B cell (primary cell): ENCODE measurements at regions of chr10 and their contacts with region 1.

Region 1: DNA sequence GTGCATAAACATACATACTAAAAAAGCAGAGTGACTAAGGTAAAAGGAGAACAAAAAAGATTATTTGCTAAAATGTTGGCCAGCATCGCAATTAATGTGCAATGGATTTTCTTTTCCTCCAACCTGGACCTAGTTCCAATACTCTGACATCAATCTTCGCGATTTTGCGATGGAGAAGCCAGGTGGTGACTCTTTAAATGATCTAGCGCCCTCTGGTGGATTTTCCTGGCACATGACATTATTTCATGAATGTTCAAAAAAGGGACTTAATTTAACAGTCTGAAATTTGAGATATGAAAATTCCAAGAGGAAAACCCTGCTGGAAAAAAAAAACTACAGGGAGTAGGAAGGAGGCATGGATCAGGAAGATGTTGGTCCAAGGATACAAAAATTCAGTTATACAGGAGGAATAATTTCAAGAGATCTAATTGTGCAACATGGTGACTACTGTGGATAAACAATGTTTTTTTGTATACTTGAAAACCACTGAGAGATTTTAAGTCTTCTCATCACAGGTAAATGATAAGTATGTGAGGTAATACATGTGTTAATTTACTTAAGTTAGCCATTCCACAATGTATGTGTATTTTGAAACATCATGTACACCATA is 4.3 kb upstream of the KCNMA1 start:
- DNase-seq: peak; percentile 77
- ATAC-seq: no peak
- H3K4me3 ChIP-seq: no peak overlapping the region
- H3K4me3 Mint-ChIP-seq: no peak overlapping the region
- H3K27ac ChIP-seq: no peak overlapping the region
- H3K27ac Mint-ChIP-seq: no peak overlapping the region
- H3K4me1 ChIP-seq: peaks cover 19 to 20% of the 10 kb centered on the region in 2 donors
- H3K4me1 Mint-ChIP-seq: peaks cover 18% of the 10 kb centered on the region
- H3K27me3 ChIP-seq: peaks cover 0 to 32% (median 18%) of the 10 kb centered on the region in 4 experiments
- H3K27me3 Mint-ChIP-seq: peaks cover 35% of the 10 kb centered on the region
- CTCF ChIP-seq: peak; percentile 88

Region 2: GRCh38 chr10:77165445-77166208 is 476.3 kb before region 1 on chr10:
- CTCF ChIA-PET with region 1: interaction called, 523 read pairs
- POLR2A ChIA-PET with region 1: no interaction called
- intact Hi-C with region 1: loop called (anchors 2 kb)
- DNase-seq: peak; percentile 58
- ATAC-seq: peak; percentile 51
- H3K4me3 ChIP-seq: no peak overlapping the region
- H3K4me3 Mint-ChIP-seq: peak overlapping the region; percentile 44
- H3K27ac ChIP-seq: no peak overlapping the region
- H3K27ac Mint-ChIP-seq: no peak overlapping the region
- H3K4me1 ChIP-seq: no peaks in the 10 kb centered on the region
- H3K4me1 Mint-ChIP-seq: peaks cover 2% of the 10 kb centered on the region
- H3K27me3 ChIP-seq: peaks cover 0 to 9% (median 0%) of the 10 kb centered on the region in 4 experiments
- H3K27me3 Mint-ChIP-seq: peaks cover 20% of the 10 kb centered on the region
- CTCF ChIP-seq: peak; percentile 89

Region 3: DNA sequence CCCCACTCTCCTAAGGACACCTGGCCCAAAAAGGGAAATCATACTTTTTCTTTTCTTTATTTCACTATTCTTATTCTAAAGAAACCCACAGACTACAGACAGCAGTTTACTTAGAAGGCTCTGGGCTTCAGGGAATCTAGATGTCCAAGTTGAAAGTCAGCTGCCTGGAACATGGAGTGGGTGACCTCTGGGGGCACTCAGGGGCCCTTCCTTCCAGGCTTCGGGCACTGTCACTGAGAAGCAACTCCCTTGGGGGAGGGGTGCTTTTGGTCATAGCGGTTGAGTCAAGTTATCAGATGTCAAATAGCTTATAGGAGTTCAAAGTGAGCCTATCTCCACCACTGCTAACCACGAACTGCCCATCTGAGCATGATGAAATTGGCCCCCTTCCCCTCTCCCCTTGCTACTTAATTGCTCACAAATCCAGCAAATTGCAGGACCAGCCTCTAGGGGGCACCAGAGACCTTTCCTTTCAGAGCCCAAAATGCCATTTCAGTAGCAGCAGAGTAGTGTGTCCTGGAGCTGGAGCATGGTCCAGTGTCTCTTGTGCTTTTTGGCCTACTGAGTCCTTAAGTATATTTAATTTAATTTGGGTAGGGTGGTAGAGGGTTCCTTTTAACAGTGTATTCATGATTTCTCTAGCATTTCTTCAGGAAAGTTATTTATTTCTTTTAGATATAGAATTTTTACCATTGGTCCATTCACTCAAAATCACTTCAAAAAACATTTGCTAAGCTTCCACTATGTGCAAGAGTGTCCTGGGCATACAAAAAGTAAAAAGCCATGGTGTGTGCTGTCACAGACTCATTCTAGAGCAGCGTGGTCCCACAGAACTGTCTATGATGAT is 468.1 kb before region 1 on chr10:
- CTCF ChIA-PET with region 1: interaction called, 523 read pairs
- POLR2A ChIA-PET with region 1: no interaction called
- intact Hi-C with region 1: loop called (anchors 1 kb)
- DNase-seq: peak; percentile 77
- ATAC-seq: no peak
- H3K4me3 ChIP-seq: no peak overlapping the region
- H3K4me3 Mint-ChIP-seq: no peak overlapping the region
- H3K27ac ChIP-seq: no peak overlapping the region
- H3K27ac Mint-ChIP-seq: no peak overlapping the region
- H3K4me1 ChIP-seq: peaks cover 0 to 6% of the 10 kb centered on the region in 2 donors
- H3K4me1 Mint-ChIP-seq: peaks cover 2% of the 10 kb centered on the region
- H3K27me3 ChIP-seq: peaks cover 0 to 5% (median 0%) of the 10 kb centered on the region in 4 experiments
- H3K27me3 Mint-ChIP-seq: peaks cover 4% of the 10 kb centered on the region
- CTCF ChIP-seq: peak; percentile 98

Region 4: DNA sequence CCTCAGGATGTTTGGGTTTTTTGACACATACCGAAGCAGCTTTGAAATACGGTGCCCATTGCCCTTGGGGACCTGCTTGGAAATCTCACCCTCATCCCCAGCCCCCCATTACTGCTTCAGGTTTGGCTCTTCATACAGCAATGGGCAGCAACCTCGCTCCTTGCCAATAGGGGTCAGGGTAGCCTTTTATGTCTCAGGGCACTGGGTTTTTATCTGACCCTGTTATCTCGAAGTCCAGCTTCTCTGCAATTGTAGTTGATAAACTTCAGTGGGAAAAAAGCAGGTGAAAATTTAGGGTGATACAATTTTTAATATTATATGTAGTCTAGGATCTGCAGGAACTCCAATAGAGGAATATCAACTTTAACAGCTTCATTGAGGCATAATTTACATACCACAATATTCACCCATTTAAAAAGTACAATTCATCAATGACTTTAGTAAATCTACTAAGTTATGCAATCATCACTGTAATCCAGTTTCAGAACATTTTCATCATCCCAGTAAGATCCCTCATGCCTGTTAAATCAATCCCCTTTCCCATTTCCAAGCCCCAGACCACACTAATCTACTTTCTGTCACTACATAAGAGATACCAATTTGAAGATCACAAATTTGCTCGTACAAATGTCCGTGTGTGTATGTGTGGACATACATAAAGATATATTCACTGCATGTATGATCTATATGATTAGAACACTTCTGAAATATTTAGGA is 390.4 kb before region 1 on chr10:
- CTCF ChIA-PET with region 1: interaction called, 32 read pairs
- POLR2A ChIA-PET with region 1: no interaction called
- intact Hi-C with region 1: loop called (anchors 1 kb)
- DNase-seq: peak; percentile 43
- ATAC-seq: no peak
- H3K4me3 ChIP-seq: no peak overlapping the region
- H3K4me3 Mint-ChIP-seq: no peak overlapping the region
- H3K27ac ChIP-seq: no peak overlapping the region
- H3K27ac Mint-ChIP-seq: no peak overlapping the region
- H3K4me1 ChIP-seq: no peaks in the 10 kb centered on the region
- H3K4me1 Mint-ChIP-seq: no peaks in the 10 kb centered on the region
- H3K27me3 ChIP-seq: no peaks in the 10 kb centered on the region
- H3K27me3 Mint-ChIP-seq: no peaks in the 10 kb centered on the region
- CTCF ChIP-seq: peak; percentile 49

Region 5: GRCh38 chr10:77391605-77392235 is 250.2 kb before region 1 on chr10:
- CTCF ChIA-PET with region 1: interaction called, 26 read pairs
- POLR2A ChIA-PET with region 1: no interaction called
- intact Hi-C with region 1: loop called (anchors 1 kb)
- DNase-seq: peak; percentile 42
- ATAC-seq: no peak
- H3K4me3 ChIP-seq: no peak overlapping the region
- H3K4me3 Mint-ChIP-seq: no peak overlapping the region
- H3K27ac ChIP-seq: no peak overlapping the region
- H3K27ac Mint-ChIP-seq: no peak overlapping the region
- H3K4me1 ChIP-seq: no peaks in the 10 kb centered on the region
- H3K4me1 Mint-ChIP-seq: peaks cover 5% of the 10 kb centered on the region
- H3K27me3 ChIP-seq: peaks cover 0 to 9% (median 0%) of the 10 kb centered on the region in 4 experiments
- H3K27me3 Mint-ChIP-seq: peaks cover 11% of the 10 kb centered on the region
- CTCF ChIP-seq: peak; percentile 20

Region 6: DNA sequence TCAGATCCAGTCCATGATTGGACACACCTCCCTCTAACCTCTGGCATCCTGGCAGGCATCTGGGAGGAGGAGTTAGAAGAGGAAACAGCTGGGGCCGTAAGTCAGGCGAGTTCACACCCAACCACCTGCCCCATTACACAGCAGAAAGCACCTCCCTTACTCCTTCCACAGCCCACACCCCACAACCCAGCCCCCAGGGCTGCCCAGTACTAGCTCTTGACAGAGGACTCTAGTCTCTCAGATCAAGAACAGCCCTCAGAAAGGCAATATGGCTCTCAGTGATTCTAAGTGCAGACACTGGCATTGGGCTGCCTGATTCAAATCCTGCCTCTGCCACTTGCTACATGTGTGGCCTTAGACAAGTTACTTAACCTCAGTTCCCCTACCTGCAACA is 38.4 kb before region 1 on chr10:
- CTCF ChIA-PET with region 1: interaction called, 4 read pairs
- POLR2A ChIA-PET with region 1: no interaction called
- intact Hi-C with region 1: loop called (anchors 2 kb)
- DNase-seq: peak; percentile 27
- ATAC-seq: peak; percentile 21
- H3K4me3 ChIP-seq: no peak overlapping the region
- H3K4me3 Mint-ChIP-seq: peak overlapping the region; percentile 40
- H3K27ac ChIP-seq: no peak overlapping the region
- H3K27ac Mint-ChIP-seq: peak overlapping the region; percentile 60
- H3K4me1 ChIP-seq: peaks cover 18 to 28% of the 10 kb centered on the region in 2 donors
- H3K4me1 Mint-ChIP-seq: peaks cover 26% of the 10 kb centered on the region
- H3K27me3 ChIP-seq: no peaks in the 10 kb centered on the region
- H3K27me3 Mint-ChIP-seq: no peaks in the 10 kb centered on the region
- CTCF ChIP-seq: no peak

Region 7: GRCh38 chr10:77653210-77653609 is 11.3 kb after region 1 on chr10:
- CTCF ChIA-PET with region 1: interaction called, 18 read pairs
- POLR2A ChIA-PET with region 1: no interaction called
- intact Hi-C with region 1: no loop called
- DNase-seq: no peak
- ATAC-seq: no peak
- H3K4me3 ChIP-seq: no peak overlapping the region
- H3K4me3 Mint-ChIP-seq: no peak overlapping the region
- H3K27ac ChIP-seq: no peak overlapping the region
- H3K27ac Mint-ChIP-seq: no peak overlapping the region
- H3K4me1 ChIP-seq: no peaks in the 10 kb centered on the region
- H3K4me1 Mint-ChIP-seq: peaks cover 6% of the 10 kb centered on the region
- H3K27me3 ChIP-seq: no peaks in the 10 kb centered on the region
- H3K27me3 Mint-ChIP-seq: peaks cover 6% of the 10 kb centered on the region
- CTCF ChIP-seq: no peak

Region 8: DNA sequence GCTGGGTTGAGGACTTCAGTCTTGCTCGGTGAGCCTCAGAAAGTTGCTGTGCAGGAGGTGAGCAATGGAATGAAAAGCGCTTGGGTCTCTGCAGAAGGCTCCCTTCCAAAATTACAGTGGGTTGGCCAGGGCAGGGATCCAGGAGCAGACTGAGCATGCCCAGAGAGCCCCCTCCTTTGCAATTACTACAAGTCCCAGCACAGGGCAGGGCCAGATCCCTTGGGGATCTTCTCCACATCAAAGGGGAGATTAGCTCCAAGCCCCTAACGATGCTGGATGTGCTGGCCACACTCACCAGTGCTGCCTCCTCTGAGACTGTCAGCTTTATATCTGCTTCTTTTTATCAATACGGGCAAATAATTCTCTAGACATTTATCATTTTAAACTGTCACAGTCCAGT is 729.2 kb after region 1 on chr10:
- CTCF ChIA-PET with region 1: no interaction called
- POLR2A ChIA-PET with region 1: no interaction called
- intact Hi-C with region 1: no loop called
- DNase-seq: no peak
- ATAC-seq: no peak
- H3K4me3 ChIP-seq: no peak overlapping the region
- H3K4me3 Mint-ChIP-seq: no peak overlapping the region
- H3K27ac ChIP-seq: no peak overlapping the region
- H3K27ac Mint-ChIP-seq: no peak overlapping the region
- H3K4me1 ChIP-seq: no peaks in the 10 kb centered on the region
- H3K4me1 Mint-ChIP-seq: no peaks in the 10 kb centered on the region
- H3K27me3 ChIP-seq: no peaks in the 10 kb centered on the region
- H3K27me3 Mint-ChIP-seq: peaks cover 3% of the 10 kb centered on the region
- CTCF ChIP-seq: no peak